GM10248 (cell line): ENCODE measurements at regions of chr4 and their contacts with region 1.

Region 1: DNA sequence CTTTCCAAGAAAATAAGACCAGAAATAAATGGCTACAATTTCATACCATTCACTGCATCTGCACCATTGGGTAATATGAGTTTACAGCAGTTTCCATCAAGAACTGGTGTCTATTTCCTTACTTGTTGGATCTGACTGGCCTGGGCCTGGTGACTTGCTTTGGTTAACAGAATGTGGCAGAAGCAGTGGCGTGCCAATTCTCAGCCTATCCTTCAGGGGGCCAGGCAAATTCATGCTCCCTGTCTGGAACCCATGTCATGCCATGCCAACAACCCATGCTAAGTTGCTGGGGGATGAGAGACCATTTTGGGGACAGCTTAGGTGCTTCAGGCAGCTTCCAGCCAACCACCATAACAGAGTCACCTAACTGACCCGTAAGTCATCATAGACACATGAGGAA is 656.7 kb downstream of the SPOCK3 start:
- DNase-seq: no peak
- CTCF ChIP-seq: no peak

Region 2: DNA sequence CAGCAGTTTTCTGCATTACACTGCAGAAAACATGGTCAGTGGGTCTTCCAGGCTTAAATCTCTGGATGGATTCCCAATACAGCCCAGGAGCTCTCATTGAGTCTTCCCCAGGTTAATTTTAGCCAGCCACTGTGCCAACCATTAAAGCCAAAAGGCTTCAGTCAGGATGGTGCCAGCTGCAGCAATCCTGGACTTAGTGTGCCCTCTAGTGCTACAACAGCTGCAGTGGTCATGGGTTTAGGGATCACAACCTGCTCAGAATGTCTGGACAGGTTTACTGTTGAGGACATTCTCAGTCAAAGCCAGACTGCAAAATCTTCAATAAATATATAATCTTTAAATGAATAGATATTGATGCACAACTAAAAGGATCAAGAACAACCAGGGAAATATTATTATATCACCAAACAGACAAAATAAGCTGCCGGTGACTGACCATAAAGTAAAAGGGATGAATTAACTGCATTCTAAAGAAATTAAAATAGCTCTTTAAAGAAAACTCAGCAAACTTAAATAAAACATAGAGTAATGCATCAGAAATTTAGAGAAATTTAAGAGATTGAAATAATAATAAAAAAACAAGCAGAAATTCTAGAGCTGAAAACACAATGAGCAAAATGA is 16.8 kb after region 1 on chr4:
- CTCF ChIA-PET with region 1: interaction called, 13 read pairs
- POLR2A ChIA-PET with region 1: no interaction called
- DNase-seq: peak; percentile 6
- CTCF ChIP-seq: peak; percentile 32